ENCODE measurements at regions of chr3 and their contacts with region 1.

Region 1: DNA sequence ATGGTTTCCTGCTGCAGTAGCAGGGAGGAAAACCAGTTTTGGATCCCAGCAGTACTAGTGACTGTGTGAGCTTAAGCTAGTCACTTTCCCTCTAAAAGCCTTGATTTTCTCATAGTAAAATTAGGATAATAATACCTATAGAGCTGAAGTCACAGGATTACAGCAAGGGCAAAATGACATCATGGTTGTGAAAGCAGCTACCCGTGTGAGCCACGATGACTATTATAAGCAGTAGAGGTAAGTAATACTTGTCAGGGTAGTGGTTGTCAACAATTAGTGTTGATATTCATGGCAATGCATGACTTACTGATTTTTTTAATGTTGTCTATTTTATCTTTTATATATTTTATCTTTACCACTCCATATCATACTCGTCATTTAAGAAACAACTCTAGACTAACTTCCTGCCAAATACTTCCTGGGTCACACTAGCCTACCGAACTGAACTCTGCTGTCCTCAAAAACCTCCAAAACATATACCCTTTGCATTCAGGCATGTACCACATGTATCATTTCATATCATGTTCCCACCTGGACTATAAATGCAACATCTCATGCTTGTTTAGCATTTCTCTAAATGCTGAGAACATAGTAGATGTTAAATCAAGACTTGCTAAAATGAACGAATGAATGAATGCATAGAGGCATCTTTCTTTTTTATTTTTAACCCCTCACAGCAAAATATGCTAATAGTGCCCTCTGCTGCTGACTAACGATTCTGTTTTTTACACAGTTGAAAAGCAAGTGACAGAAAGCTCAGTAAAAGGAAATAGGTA is 172.6 kb downstream of the P3H2 start:
- DNase-seq: no peak

Region 2: DNA sequence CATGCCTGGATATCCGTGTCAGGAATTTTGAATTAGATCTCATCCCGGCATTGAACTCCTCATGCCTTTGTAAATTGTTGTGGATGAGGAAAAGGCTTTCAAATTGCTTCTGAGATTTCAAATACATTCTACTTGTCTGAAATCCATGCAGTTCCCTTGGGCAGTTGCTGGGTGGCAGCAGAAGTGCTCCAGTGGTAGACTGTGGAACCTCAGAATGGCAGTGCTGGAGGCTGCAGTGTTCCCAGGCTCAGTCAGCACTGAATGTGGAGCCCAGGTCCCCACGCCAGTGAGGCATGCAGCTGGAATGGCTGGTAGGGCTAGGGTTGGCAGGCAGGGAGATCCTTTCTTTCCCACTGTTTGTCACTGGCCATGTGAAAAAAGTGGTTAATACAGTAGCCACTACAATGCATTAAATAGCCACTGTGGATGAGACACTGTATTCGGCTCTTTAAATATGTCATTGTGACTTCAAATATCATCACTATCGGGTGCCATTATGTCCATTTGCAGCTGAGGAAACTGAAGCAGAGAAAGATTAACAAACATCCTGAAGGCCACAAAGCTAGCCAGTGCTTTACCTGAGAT is 677.8 kb before region 1 on chr3:
- intact Hi-C with region 1: loop called (anchors 5 kb)
- DNase-seq: no peak

Region 3: DNA sequence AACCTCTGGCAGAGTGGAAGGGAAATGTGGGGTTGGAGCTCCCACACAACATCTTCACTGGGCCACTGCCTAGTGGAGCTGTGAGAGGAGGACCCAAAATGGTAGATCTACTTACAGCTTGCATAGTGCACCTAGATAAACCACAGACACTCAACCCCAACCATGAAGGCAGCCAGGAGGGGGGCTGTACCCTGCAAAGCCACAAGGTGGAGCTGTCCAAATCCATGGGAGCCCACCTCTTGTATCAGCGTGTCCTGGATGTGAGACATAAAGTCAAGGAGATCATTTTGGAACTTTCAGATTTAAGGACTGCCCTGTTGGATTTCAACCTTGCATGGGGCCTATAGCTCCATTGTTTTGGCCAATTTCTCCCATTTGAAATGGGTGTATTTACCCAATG is 296.1 kb before region 1 on chr3:
- intact Hi-C with region 1: loop called (anchors 10 kb)
- DNase-seq: no peak